ENCODE measurements at regions of chr22 and their contacts with region 1.

Region 1: GRCh38 chr22:37508431-37508992 is 10.7 kb downstream of the CARD10 start:
- DNase-seq: no peak
- H3K4me3 Mint-ChIP-seq: peak overlapping the region; percentile 24
- H3K27ac Mint-ChIP-seq: peak overlapping the region; percentile 75
- H3K4me1 Mint-ChIP-seq: peaks cover 56% of the 10 kb centered on the region
- H3K27me3 Mint-ChIP-seq: no peaks in the 10 kb centered on the region
- CTCF ChIP-seq: no peak

Region 2: DNA sequence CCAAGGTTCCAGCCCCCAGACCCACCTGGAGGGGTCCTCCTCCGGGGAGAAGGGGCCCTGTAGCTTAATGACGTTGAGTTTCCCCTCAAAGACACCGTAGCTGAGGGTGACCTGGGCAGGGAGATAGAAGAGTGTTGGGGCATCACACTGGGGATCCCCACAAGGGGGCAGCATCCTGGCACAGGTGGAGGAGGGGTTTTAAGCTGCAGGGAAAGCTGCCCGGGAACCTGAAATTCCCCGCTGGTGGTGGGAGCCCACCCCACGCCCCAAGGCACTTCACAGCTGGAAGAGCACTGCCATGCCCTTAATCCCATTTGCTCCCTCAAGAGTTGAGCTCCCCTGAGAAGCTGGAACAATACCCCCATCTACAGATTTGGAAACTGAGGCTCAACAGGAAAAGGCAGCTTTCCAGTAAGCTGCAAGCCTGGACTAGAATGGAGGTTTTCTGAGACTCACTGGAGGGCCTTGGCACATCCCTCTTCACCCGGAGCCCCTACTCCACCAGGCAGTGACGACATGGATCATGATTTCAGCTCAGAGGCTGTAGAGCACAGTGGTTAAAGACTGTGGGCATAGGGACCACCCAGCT is 36.0 kb before region 1 on chr22:
- CTCF ChIA-PET with region 1: interaction called, 13 read pairs
- intact Hi-C with region 1: no loop called
- DNase-seq: peak; percentile 77
- H3K4me3 Mint-ChIP-seq: no peak overlapping the region
- H3K27ac Mint-ChIP-seq: no peak overlapping the region
- H3K4me1 Mint-ChIP-seq: no peaks in the 10 kb centered on the region
- H3K27me3 Mint-ChIP-seq: no peaks in the 10 kb centered on the region
- CTCF ChIP-seq: peak; percentile 77

Region 3: DNA sequence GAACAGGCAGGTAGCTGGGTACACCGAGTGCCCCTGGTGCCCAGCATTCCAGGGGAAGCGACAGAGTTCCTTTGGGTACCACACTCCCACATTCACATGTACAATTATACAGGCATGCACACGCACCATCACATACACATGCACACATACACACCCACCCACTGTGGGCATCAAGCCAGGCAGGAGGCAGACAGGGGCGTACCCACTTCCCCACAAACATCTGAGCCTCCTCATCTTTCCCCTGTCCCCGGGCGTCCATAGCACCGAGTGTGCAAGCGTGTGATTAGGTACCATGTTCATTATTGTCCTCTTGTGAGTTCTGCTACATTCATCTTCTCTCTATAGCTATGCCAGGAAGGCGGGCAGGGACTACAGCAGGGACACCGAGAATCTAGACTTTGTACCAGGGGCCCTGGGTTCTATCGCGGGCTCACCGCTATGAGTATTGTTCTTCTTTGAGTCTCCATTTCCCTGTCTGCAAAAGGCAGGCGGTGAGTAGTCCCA is 12.8 kb after region 1 on chr22:
- CTCF ChIA-PET with region 1: interaction called, 13 read pairs
- intact Hi-C with region 1: no loop called
- DNase-seq: no peak
- H3K4me3 Mint-ChIP-seq: no peak overlapping the region
- H3K27ac Mint-ChIP-seq: no peak overlapping the region
- H3K4me1 Mint-ChIP-seq: peaks cover 25% of the 10 kb centered on the region
- H3K27me3 Mint-ChIP-seq: no peaks in the 10 kb centered on the region
- CTCF ChIP-seq: no peak